Panc1 (cell line): ENCODE measurements at regions of chr4 and their contacts with region 1.

Region 1: GRCh38 chr4:41913509-41913908 is 21.7 kb upstream of the TMEM33 start:
- DNase-seq: no peak
- ATAC-seq: no peak
- H3K4me3 ChIP-seq: no peak overlapping the region
- H3K27ac ChIP-seq: no peak overlapping the region
- H3K4me1 ChIP-seq: no peaks in the 10 kb centered on the region
- H3K27me3 ChIP-seq: no peaks in the 10 kb centered on the region
- CTCF ChIP-seq: no peak

Region 2: DNA sequence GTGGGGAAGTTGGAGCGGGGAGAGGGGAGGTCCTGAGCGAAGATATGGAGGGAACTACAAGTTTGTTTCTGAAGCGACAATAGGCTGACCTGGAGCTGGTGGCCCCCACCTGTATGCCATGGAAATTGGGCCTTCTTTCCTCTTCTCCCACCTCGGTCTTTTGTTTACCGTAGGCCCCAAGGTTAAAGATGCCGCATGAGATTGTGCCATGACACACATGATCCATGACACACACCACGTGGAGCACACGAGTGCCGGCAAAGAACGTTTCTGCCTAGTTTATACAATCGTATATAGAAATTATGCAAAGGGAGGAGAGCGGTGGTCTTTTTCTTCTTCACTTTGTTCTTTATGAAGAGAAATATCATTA is 22.1 kb after region 1 on chr4:
- CTCF ChIA-PET with region 1: interaction called, 11 read pairs
- POLR2A ChIA-PET with region 1: no interaction called
- in situ Hi-C with region 1: no loop called
- intact Hi-C with region 1: no loop called
- DNase-seq: no peak
- ATAC-seq: peak; percentile 8; the same call in 1 of the 2 replicates
- H3K4me3 ChIP-seq: peak overlapping the region; percentile 94 to 98
- H3K27ac ChIP-seq: peak overlapping the region; percentile 90
- H3K4me1 ChIP-seq: peaks cover 4% of the 10 kb centered on the region
- H3K27me3 ChIP-seq: no peaks in the 10 kb centered on the region; the same call in 1 of the 2 replicates
- CTCF ChIP-seq: no peak

Region 3: DNA sequence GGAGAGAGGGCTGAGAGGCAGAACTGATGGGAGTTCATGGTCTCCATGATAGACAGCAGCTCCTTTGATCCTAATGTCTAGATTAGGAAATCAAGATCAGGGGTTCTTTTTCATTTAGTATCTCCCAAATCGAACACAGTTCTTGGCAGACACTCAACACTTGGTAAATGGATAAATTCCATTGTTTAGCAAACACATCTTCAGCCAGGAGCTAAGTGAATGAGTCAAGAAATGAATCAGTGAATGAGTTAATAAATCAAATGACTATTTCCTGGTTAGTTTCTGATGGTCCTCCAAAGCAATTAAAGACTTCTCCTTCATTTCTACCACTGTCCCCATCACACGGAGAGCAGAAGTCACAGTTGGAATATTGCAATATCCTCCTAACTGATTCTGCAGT is 363.8 kb after region 1 on chr4:
- CTCF ChIA-PET with region 1: no interaction called
- POLR2A ChIA-PET with region 1: interaction called, 11 read pairs
- in situ Hi-C with region 1: no loop called
- intact Hi-C with region 1: no loop called
- DNase-seq: no peak
- ATAC-seq: no peak
- H3K4me3 ChIP-seq: no peak overlapping the region
- H3K27ac ChIP-seq: no peak overlapping the region
- H3K4me1 ChIP-seq: no peaks in the 10 kb centered on the region; the same call in 1 of the 2 replicates
- H3K27me3 ChIP-seq: no peaks in the 10 kb centered on the region
- CTCF ChIP-seq: no peak